Tibial artery (tissue), 4 donors: ENCODE measurements at regions of chr7 and their contacts with region 1.

Region 1: GRCh38 chr7:101251871-101252659 is 7.2 kb upstream of the FIS1 start:
- DNase-seq: peak; percentile 97 to 98
- H3K4me3 ChIP-seq: peak overlapping the region; percentile 72 to 95
- H3K27ac ChIP-seq: peak overlapping the region; percentile 75 to 77
- H3K4me1 ChIP-seq: peaks cover 0 to 26% (median 20%) of the 10 kb centered on the region in 4 donors
- H3K27me3 ChIP-seq: peaks cover 0 to under 1% of the 10 kb centered on the region in 2 donors
- CTCF ChIP-seq: no peak

Region 2: DNA sequence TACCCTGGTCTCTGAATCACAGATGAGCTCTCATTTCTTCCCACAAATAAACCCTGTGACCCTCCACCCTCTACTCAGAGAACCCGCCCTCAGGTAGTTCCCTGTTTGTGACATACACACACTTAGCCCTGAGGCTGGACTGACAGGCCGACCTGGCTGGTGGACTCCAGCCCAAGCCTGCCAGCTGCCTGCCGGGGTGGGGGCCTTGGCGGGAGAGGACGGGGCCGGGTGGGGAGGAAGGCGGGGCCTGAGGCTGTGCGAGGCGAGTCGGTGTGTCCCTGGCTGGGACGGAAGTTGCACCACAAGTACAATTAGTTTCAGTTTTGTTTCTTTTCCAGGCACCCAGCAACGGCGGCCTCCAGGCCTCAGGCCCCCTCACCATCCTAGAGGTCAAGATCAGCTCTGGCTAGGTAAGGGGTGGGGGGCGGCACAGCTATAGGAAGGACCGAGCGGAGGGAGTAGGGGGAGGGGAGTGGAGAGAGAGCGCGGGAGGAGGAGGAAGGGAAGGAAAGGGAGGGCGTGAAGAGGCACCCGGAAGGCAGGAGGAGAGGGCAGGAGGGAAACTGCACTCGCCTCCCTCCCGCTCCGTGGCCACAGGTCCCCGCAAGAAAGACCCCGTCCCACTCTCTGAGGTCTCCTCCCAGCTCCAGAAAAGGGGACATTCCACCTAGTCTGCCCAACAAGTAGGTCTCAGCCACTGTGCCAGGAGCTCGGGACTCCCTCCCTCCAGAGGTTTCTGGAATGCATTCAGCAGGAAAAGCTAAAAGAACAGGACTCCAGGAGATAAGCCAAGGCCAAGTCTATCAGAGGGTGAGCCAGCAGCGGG is 166.7 kb before region 1 on chr7 and contains the start of gene TRIM56:
- intact Hi-C with region 1: loop called (anchors 5 kb)
- DNase-seq: peak; percentile 85 to 94
- H3K4me3 ChIP-seq: peak within 1 kb of the TSS; percentile 78 to 92
- H3K27ac ChIP-seq: peak within 1 kb of the TSS; percentile 93 to 96
- H3K4me1 ChIP-seq: peaks cover 0 to 45% (median 38%) of the 10 kb centered on the region in 4 donors
- H3K27me3 ChIP-seq: peaks cover 0 to 1% of the 10 kb centered on the region in 2 donors
- CTCF ChIP-seq: no peak

Region 3: DNA sequence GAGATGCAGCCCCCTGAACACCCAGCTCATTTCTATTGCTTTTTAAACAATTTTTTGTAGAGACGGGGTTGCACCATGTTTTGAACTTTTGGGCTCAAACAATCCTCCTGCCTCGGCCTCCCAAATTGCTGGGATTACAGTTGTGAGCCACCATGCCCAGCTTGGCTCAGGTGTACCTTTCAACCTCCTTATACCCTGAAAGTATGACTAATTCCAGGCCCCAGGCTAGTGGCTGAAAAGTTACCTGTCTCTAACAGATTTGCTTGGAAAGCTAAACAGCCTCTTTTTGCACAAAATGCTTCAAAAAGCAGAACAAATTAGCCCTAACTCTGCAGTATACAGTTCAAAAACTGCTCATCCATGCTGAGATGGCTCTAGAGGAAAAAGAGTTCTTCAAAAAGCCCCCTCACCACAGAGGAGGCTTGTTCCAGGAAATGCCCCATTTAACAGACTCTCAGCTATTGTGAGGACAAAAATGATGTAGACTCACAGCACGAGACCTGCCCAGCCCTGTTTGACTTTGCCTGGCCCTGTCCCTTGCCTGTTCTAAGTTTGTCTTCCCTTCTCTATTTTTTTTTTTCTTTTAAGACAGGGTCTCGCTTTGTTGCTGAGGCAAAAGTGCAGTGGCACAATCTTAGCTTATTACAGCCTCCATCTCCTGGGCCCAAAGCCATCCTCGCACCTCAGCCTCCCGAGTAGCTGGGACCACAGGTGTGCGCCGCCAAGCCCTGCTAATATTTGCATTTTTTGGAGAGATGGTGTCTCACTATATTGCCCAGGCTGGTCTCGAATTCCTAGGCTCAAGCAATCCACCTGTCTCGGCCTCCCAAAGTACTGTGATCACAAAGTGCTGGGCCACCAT is 111.1 kb before region 1 on chr7:
- intact Hi-C with region 1: no loop called
- DNase-seq: no peak
- H3K4me3 ChIP-seq: no peak overlapping the region
- H3K27ac ChIP-seq: no peak overlapping the region
- H3K4me1 ChIP-seq: peaks cover 0 to 24% (median 10%) of the 10 kb centered on the region in 4 donors
- H3K27me3 ChIP-seq: peaks cover 0 to 2% of the 10 kb centered on the region in 2 donors
- CTCF ChIP-seq: no peak

Region 4: DNA sequence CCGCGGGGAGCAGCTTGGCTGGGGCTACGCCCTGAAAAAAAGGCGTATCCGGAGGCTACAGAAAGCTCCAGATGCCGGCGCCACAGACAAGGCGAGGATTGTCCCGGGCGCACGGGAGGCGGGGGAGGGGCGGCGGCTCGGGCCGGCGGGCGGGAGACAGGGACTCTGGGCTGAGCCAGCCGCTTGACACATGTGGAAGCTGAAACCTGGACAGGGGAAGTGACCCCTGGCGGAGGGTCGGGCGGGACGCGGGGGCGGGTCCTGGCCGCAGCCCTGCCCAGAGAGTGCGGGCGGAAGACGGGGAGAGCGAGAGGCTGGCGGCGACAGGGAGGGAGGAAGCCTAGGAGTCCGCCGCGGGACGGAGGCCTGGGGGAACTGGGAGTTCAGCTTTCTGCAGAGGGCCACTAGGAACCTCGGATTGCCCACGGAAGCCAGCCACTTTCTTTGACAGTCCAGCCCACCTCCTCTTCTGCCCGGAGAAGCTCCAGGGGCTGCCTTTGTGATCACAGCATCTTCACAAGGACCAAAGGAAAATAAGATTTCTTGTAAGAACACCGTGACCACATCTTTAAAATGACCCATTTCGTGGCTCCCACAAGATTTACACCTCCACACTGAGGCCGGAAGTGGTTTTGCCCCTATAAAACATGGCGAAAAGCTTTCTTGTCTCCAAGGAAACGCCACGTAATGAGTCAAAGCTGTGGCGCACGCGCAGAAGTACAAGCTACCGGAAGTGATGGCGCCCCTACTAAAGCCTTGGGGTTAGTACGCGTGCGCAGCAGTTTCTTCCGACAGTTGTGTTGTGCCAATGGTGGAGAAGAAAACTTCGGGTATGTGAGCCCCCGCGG is 34.5 kb before region 1 on chr7 and contains the starts of genes PLOD3 and ZNHIT1:
- intact Hi-C with region 1: loop called (anchors 2 kb)
- DNase-seq: peak; percentile 97 to 98
- H3K4me3 ChIP-seq: peak within 1 kb of the TSS; percentile 65 to 94
- H3K27ac ChIP-seq: peak within 1 kb of the TSS; percentile 81 to 82
- H3K4me1 ChIP-seq: peaks cover 0 to 41% (median 26%) of the 10 kb centered on the region in 4 donors
- H3K27me3 ChIP-seq: no peaks in the 10 kb centered on the region
- CTCF ChIP-seq: no peak